Activated CD8-positive, alpha-beta T cell treated with anti-CD3 and anti-CD28 coated beads, Interleukin-2, amount 10 ng/mL, durations not matched to agents 7 days and 5 days (primary cell): ENCODE measurements at regions of chr11 and their contacts with region 1.

Region 1: GRCh38 chr11:134050541-134051383 is 18.1 kb upstream of the JAM3 start:
- DNase-seq: peak; percentile 83
- ATAC-seq: peak; percentile 92
- H3K4me3 Mint-ChIP-seq: no peak overlapping the region
- H3K27ac Mint-ChIP-seq: no peak overlapping the region
- H3K4me1 Mint-ChIP-seq: peaks cover 23% of the 10 kb centered on the region
- H3K27me3 Mint-ChIP-seq: no peaks in the 10 kb centered on the region

Region 2: GRCh38 chr11:133947321-133947756 is 103.4 kb before region 1 on chr11:
- CTCF ChIA-PET with region 1: interaction called, 17 read pairs
- POLR2A ChIA-PET with region 1: no interaction called
- DNase-seq: peak; percentile 83
- ATAC-seq: peak; percentile 48
- H3K4me3 Mint-ChIP-seq: peak overlapping the region; percentile 82
- H3K27ac Mint-ChIP-seq: peak overlapping the region; percentile 96
- H3K4me1 Mint-ChIP-seq: peaks cover 96% of the 10 kb centered on the region
- H3K27me3 Mint-ChIP-seq: no peaks in the 10 kb centered on the region

Region 3: DNA sequence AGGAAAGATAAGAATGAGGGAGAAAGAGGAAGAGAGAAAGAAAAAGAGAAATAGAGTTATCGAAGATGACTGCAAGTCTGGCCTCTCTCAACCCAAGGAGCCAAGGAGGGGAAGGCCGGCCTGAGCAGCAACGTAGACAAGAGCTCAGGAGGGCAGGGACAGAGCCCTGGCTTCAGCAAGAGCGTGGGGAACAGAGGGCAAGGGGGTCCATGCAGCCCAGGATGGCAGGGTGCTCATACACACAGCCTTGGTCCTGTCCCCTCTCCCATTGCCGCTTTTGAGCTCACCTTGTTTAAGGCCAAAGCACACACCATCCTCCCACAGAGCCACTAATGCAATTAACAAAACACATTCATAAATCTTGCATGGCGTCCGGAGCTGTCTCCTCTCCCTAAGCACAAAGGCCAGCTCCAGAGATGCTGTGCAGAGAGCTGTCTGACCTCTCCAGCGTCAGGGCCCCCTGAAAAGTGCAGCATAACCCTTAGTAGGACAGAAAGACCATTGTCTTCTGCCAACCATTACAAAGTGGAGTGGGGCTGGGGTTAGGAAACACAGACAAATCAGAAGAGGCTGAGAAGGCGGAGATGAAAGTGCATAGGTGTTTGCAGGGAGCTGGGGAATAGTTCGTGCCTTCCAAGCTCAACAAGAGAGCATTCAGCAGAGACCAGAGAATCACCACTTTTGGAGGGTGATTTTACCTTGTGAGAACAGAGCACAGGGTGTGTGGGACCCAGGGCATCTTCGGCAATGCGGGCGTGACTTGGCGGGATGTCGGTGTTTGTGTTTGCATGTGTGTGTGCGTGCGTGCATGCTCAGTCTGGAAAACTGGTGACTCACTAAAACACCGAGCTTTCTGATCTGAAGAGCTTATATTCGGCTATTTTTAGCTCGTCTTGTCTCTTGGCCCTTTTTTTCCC is 10.1 kb before region 1 on chr11:
- CTCF ChIA-PET with region 1: interaction called, 42 read pairs
- POLR2A ChIA-PET with region 1: no interaction called
- DNase-seq: no peak
- ATAC-seq: no peak
- H3K4me3 Mint-ChIP-seq: no peak overlapping the region
- H3K27ac Mint-ChIP-seq: no peak overlapping the region
- H3K4me1 Mint-ChIP-seq: peaks cover 32% of the 10 kb centered on the region
- H3K27me3 Mint-ChIP-seq: no peaks in the 10 kb centered on the region

Region 4: GRCh38 chr11:134068829-134069425 is 18.2 kb after region 1 on chr11 and contains the start of gene JAM3:
- CTCF ChIA-PET with region 1: interaction called, 52 read pairs
- POLR2A ChIA-PET with region 1: no interaction called
- DNase-seq: peak; percentile 98
- ATAC-seq: peak; percentile 94
- H3K4me3 Mint-ChIP-seq: peak within 1 kb of the TSS; percentile 91
- H3K27ac Mint-ChIP-seq: peak within 1 kb of the TSS; percentile 84
- H3K4me1 Mint-ChIP-seq: peaks cover 15% of the 10 kb centered on the region
- H3K27me3 Mint-ChIP-seq: peaks cover 60% of the 10 kb centered on the region
- total RNA-seq, gene JAM3: 8.0 to 9.6 TPM

Region 5: DNA sequence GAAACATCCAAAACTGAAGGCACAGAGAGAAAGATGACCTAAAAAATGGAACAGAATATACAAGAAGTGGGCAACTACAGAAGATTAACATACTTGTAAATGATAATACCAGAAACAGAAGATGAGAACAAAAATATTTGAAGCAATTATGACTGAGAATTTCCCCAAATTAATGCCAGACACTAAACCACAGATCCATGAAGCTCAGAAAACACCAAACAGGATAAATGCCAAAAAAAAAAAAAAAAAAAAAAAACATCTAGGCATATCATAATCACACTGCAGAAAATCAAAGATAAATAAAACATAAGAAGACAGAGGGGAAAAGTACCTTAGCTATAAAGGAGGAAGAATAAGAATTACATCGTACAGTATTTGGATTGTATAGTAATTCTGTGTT is 83.4 kb after region 1 on chr11:
- CTCF ChIA-PET with region 1: interaction called, 39 read pairs
- POLR2A ChIA-PET with region 1: no interaction called
- DNase-seq: no peak
- ATAC-seq: no peak
- H3K4me3 Mint-ChIP-seq: no peak overlapping the region
- H3K27ac Mint-ChIP-seq: no peak overlapping the region
- H3K4me1 Mint-ChIP-seq: no peaks in the 10 kb centered on the region
- H3K27me3 Mint-ChIP-seq: peaks cover 4% of the 10 kb centered on the region

Region 6: DNA sequence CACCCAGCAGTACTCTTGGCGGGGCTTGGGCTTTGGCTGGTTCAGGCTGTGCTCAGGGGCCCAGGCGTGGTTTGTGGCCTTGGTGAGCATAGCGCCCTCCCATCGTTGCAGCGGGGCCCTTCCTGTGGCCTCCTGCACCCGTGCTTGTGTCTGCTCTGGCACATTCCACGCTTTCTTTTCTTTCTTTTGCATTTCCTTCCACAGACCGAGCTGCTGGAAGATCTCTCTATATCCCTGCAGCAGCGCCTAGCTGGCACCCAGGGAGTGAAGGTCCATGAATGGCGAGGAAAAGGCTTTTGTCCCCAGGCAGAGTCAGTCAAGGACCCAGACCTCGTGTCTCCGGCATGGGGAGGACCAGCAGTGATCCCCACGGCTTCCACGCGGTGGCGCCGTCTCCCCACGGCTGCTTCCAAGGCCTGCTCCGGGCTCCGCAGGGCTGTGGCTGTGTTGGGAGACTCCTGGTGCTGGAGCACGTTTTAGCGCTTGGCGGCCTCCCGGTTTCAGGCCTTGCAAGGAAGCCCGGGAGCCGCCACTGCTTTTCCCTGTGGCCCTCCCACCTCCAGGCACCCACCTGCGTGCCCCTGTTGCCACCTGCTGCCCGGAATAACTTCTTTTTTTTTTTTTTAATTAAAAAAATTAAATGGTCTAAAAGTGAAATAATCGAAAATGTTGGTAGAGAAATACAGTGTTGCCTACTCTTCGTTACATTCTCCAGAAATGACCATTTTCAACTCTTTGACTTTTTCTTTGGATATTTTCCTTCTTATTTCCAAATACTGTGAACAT is 309.5 kb after region 1 on chr11:
- CTCF ChIA-PET with region 1: no interaction called
- POLR2A ChIA-PET with region 1: no interaction called
- DNase-seq: peak; percentile 84
- ATAC-seq: peak; percentile 97
- H3K4me3 Mint-ChIP-seq: peak overlapping the region; percentile 34
- H3K27ac Mint-ChIP-seq: no peak overlapping the region
- H3K4me1 Mint-ChIP-seq: peaks cover 14% of the 10 kb centered on the region
- H3K27me3 Mint-ChIP-seq: peaks cover 4% of the 10 kb centered on the region